WTC11 (cell line): ENCODE measurements at regions of chr5 and their contacts with region 1.

Region 1: GRCh38 chr5:151825445-151825844 is 53.7 kb downstream of the G3BP1 start:
- DNase-seq: peak; percentile 64
- ATAC-seq: peak; percentile 79
- H3K4me3 Mint-ChIP-seq: no peak overlapping the region
- H3K27ac Mint-ChIP-seq: no peak overlapping the region; the same call in 1 of the 2 replicates
- H3K4me1 Mint-ChIP-seq: peaks cover 7% of the 10 kb centered on the region
- H3K27me3 Mint-ChIP-seq: no peaks in the 10 kb centered on the region; the same call in 1 of the 2 replicates
- CTCF ChIP-seq: peak; percentile 79

Region 2: DNA sequence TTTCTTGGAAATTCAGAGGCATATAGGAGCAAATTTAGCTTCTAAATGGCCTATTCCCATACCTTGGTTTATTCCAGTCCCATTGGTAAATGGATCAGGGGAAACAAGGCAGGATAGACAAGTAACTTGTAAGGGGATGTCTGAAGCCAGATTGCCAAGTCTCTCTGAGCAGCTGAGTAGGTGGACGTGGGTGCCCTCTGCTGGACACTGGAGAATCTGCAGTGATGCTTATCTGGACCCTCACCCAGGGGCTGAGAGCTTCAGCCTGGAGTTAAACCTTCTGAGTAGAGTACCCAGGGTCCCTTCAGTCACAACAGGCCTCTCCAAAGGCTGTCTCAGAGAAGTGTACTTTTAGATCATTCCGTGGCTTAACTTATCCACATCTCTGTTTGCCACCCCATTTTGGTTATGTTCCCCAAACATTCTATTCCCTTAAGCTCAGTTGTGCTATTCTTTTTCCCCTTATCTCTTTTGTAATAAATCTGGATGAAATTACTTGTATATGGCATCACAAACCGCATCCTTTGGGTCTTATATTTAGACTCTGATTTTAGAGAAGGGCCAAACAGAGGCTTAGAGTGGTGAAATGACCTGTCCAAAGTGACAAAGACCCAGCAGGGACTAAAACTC is 317.5 kb after region 1 on chr5:
- CTCF ChIA-PET with region 1: interaction called, 99 read pairs
- POLR2A ChIA-PET with region 1: no interaction called
- DNase-seq: peak; percentile 82
- ATAC-seq: peak; percentile 96
- H3K4me3 Mint-ChIP-seq: no peak overlapping the region
- H3K27ac Mint-ChIP-seq: no peak overlapping the region
- H3K4me1 Mint-ChIP-seq: peaks cover 11% of the 10 kb centered on the region
- H3K27me3 Mint-ChIP-seq: no peaks in the 10 kb centered on the region
- CTCF ChIP-seq: peak; percentile 89

Region 3: GRCh38 chr5:152262667-152263066 is 437.2 kb after region 1 on chr5:
- CTCF ChIA-PET with region 1: interaction called, 15 read pairs
- POLR2A ChIA-PET with region 1: no interaction called
- DNase-seq: peak; percentile 16
- ATAC-seq: peak; percentile 100
- H3K4me3 Mint-ChIP-seq: no peak overlapping the region
- H3K27ac Mint-ChIP-seq: no peak overlapping the region
- H3K4me1 Mint-ChIP-seq: peaks cover 15% of the 10 kb centered on the region
- H3K27me3 Mint-ChIP-seq: peaks cover 100% of the 10 kb centered on the region
- CTCF ChIP-seq: no peak

Region 4: GRCh38 chr5:152349683-152350526 is 524.5 kb after region 1 on chr5:
- CTCF ChIA-PET with region 1: interaction called, 29 read pairs
- POLR2A ChIA-PET with region 1: no interaction called
- DNase-seq: peak; percentile 61
- ATAC-seq: peak; percentile 94
- H3K4me3 Mint-ChIP-seq: no peak overlapping the region
- H3K27ac Mint-ChIP-seq: no peak overlapping the region
- H3K4me1 Mint-ChIP-seq: peaks cover 7% of the 10 kb centered on the region
- H3K27me3 Mint-ChIP-seq: peaks cover 3% of the 10 kb centered on the region; the same call in 1 of the 2 replicates
- CTCF ChIP-seq: peak; percentile 83